Right ventricle myocardium inferior (tissue), 1 donor: ENCODE measurements at regions of chr9 and their contacts with region 1.

Region 1: DNA sequence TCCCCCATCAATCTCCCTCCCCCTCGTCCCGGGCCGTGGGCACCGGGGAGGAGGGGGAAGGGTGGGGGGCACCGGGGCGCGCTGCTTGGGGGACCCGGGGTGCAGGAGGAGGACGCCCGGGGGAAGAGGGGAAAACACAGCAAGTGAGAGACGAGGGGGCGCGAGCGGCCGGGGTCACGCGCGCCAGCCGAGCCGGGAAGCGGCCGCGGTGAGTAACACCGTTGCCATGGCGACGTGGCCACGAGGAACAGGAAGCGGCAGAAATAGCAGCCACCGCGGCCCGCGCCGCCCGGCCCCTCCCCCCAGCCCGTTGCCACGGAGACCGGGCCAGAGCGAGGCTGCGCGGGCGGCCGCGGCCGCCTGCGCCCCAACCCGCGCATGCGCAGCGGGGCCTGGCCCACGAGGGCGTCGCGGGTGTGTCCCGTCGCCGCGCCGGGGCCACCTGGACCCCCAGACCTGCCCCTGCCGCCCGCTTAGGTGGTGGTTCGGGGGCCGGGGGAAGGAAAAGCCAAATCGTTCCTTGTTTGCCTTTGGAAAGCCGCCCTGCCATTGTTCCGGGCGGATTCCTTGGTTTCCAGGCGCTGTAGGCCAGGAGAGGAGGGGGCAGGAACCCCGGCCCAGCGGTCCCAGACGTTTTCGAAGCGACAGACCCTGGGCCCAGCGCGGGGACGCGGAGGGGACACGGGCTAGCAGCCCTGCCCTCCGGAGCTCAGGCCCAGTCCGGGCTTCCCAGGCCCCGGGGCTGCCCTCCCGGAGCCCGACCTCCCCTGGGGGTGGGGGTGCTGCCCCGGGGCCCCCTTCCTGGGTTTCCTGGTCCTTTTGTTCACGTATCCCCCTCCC is 207.1 kb downstream of the C9orf50 start:
- DNase-seq: peak; percentile 100
- ATAC-seq: peak; percentile 88

Region 2: GRCh38 chr9:129139993-129140396 is 273.8 kb before region 1 on chr9:
- intact Hi-C with region 1: loop called (anchors 1 kb)
- DNase-seq: peak; percentile 93
- ATAC-seq: peak; percentile 84

Region 3: GRCh38 chr9:129177791-129178559 is 235.8 kb before region 1 on chr9 and contains the start of gene IER5L:
- intact Hi-C with region 1: loop called (anchors 10 kb)
- DNase-seq: peak; percentile 98
- ATAC-seq: peak; percentile 84
- total RNA-seq, gene IER5L: 4.6 TPM

Region 4: GRCh38 chr9:129258124-129258822 is 155.5 kb before region 1 on chr9:
- intact Hi-C with region 1: loop called (anchors 10 kb)
- DNase-seq: peak; percentile 97
- ATAC-seq: peak; percentile 86

Region 5: DNA sequence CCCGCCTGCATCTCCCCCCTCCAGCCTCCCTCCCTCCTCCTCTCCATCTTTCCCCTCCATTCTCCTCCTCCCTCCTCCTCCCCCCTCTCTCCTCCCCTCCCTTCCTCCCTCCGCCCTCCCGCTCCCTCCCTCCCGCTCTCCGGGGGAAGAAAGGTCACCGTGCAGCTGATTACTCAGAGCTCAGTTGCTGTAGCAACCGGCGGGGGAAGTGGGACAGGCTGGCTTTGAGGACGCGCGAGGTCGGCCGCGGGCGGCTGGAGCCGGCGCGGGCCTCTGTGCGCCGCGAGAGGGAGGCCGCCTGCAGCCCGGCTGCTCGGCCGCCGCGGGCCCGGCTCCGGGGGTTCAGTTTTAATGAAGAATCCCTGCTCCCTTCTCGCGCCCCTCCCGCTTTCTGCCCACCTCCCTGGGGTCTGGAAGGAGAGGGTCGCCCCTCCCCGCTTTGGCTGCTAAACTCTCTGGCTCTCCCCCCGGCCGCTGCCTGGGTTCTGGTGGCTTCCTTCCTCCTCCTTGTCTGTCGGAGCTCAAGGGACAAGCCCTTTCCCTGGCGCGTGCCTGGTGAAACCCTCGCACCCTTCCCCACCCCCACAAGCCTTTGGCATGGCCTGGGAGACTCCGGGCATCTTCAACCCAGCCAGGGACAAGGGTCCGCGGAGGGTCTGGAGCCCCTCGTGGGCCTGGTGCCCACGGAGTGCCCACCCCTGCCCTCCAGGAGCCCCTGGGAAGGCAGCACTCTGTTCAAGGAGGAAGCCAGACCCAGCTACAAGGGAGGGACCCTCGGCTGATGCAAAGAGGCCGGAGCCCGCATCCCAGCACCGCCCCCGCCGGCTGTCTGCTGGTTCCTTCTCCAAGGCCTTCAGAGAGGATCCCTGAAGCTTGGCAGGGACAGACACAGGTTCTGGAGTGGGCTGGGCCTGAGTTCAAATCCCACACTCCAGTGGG is 46.8 kb after region 1 on chr9:
- intact Hi-C with region 1: loop called (anchors 2 kb)
- DNase-seq: peak; percentile 99
- ATAC-seq: peak; percentile 93

Region 6: GRCh38 chr9:129482521-129483414 is 69.0 kb after region 1 on chr9:
- intact Hi-C with region 1: loop called (anchors 2 kb)
- DNase-seq: peak; percentile 90
- ATAC-seq: peak; percentile 66

Region 7: DNA sequence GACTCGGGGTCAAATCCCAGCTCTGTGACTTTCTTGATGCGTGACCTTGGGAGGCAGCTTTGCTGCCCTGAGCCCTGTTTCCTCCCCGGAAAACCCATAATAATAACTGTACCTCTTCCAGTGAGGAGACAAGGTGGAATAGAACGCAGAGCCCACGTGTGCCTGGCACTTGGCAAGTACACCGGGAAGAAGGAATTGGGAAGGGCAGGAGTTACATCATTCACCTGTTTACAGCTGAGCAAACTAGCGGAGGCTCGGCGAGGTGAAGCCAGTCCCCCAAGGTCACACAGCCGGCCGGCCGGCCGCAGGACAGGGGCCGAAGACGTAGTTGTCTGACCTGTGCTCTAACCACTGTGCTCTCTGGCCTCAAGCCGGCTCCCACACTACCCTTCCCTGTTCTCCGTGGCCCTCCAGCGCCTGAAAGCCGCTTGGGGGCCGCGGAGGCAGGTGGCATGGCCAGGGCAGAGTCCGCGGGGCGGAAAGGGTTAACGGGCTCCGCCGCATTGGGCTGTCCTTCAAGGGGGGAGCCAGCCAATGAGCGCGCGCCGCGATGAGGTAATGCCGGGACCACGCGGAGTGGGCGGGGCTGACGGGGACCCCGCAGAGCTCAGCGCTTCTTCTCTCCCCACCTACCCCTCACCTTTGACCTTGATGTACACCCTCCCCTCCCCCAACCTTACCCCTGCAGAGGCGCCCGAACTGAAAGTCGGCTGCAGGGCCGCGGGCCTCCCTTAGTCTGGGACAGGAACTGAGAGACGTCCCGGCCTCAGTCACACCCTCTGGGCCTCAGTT is 82.0 kb after region 1 on chr9:
- intact Hi-C with region 1: loop called (anchors 1 kb)
- DNase-seq: peak; percentile 97
- ATAC-seq: peak; percentile 89

Region 8: GRCh38 chr9:129712634-129713401 is 299.1 kb after region 1 on chr9:
- intact Hi-C with region 1: no loop called
- DNase-seq: peak; percentile 21
- ATAC-seq: no peak

Region 9: GRCh38 chr9:129802851-129803675 is 389.3 kb after region 1 on chr9 and contains the start of gene TOR1B:
- intact Hi-C with region 1: no loop called
- DNase-seq: peak; percentile 97
- ATAC-seq: peak; percentile 99
- total RNA-seq, gene TOR1B: 10.5 TPM